ENCODE measurements at regions of chr13 and their contacts with region 1.

Region 1: DNA sequence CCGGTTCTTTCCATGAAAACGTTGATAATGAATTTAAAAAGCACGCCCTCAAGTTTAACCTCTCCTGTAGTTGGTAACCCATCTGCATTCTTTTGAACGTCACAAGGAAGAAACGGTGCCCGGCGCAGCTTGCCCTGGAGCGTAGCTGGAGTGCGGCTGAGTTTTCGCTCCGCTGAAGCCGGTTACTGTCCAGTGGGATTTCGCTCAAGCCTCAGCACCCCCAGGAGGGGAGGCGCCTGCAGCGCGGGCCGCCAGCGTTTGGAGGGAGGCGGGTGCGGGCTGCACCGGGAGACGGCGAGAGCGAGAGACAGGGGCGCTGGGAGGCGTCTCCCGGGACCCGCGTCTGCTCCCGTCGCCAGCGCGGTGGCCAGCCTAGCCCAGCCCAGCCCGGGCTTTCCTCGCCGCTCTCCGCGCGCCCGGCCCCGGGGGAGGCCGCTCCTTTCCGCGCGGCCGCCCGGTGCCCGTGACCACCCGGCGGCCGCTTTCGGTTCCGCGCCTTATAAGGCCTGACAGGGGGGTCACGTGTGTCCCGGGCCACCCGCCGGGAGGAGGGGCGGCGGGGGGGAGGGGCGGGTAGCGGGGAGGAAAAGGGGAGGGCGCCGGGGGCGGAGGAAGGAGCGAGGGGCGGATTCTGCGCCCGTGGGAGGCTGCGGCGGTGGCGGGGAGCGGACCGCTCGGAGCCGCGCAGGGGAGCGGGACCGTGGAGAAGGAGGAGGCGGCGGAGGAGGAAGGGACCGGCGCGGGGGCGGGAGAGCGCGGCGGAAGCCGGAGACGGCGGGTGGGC is 8.3 kb upstream of the DGKH start:
- DNase-seq: peak; percentile 80
- H3K4me3 Mint-ChIP-seq: peak overlapping the region; percentile 87
- H3K27ac Mint-ChIP-seq: peak overlapping the region; percentile 56
- H3K4me1 Mint-ChIP-seq: peaks cover 17% of the 10 kb centered on the region
- H3K27me3 Mint-ChIP-seq: peaks cover 44% of the 10 kb centered on the region

Region 2: GRCh38 chr13:41004875-41005693 is 1035.1 kb before region 1 on chr13:
- intact Hi-C with region 1: loop called (anchors 10 kb)
- DNase-seq: no peak
- H3K4me3 Mint-ChIP-seq: peak overlapping the region; percentile 59
- H3K27ac Mint-ChIP-seq: peak overlapping the region; percentile 88
- H3K4me1 Mint-ChIP-seq: peaks cover 66% of the 10 kb centered on the region
- H3K27me3 Mint-ChIP-seq: no peaks in the 10 kb centered on the region

Region 3: GRCh38 chr13:41263261-41264027 is 776.7 kb before region 1 on chr13 and contains the start of gene MTRF1:
- intact Hi-C with region 1: loop called (anchors 2 kb)
- DNase-seq: peak; percentile 72
- H3K4me3 Mint-ChIP-seq: peak within 1 kb of the TSS; percentile 95
- H3K27ac Mint-ChIP-seq: peak within 1 kb of the TSS; percentile 100
- H3K4me1 Mint-ChIP-seq: peaks cover 12% of the 10 kb centered on the region
- H3K27me3 Mint-ChIP-seq: no peaks in the 10 kb centered on the region
- total RNA-seq, gene MTRF1: 17.5 and 20.2 TPM in 2 replicates

Region 4: DNA sequence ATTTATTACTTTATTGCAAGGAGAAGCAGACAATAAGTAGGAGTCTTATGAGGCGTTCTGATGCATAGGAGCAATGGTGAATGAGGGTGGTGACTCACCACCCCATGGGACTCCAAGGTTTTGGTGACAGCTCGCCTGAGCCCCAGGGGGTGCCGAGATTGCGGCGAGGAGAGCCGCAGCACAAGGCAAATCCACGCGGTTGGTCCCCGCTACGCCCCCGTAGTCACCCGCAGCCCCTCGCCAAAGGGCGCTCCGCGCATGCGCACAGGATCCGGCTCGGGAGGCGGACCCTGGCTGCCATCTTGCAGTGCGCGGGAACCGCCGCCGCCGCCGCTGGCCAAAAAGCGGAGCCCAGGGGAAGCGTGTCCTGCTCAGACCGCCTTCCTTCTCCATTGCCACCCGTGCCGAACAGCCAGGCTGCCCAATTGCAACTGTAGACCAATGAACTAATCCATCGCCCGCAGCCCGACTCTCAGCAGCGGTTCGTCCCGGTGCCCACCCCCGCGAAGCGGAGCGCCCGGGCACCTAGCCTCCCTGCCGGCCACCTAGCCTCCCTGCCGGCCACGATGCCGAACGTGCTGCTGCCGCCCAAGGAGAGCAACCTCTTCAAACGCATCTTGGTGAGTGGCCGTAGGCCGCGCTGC is 729.1 kb before region 1 on chr13 and contains the start of gene NAA16:
- intact Hi-C with region 1: loop called (anchors 10 kb)
- DNase-seq: peak; percentile 92
- H3K4me3 Mint-ChIP-seq: peak within 1 kb of the TSS; percentile 94
- H3K27ac Mint-ChIP-seq: peak within 1 kb of the TSS; percentile 83
- H3K4me1 Mint-ChIP-seq: peaks cover 38% of the 10 kb centered on the region
- H3K27me3 Mint-ChIP-seq: peaks cover 2% of the 10 kb centered on the region
- total RNA-seq, gene NAA16: 31.9 and 33.4 TPM in 2 replicates

Region 5: DNA sequence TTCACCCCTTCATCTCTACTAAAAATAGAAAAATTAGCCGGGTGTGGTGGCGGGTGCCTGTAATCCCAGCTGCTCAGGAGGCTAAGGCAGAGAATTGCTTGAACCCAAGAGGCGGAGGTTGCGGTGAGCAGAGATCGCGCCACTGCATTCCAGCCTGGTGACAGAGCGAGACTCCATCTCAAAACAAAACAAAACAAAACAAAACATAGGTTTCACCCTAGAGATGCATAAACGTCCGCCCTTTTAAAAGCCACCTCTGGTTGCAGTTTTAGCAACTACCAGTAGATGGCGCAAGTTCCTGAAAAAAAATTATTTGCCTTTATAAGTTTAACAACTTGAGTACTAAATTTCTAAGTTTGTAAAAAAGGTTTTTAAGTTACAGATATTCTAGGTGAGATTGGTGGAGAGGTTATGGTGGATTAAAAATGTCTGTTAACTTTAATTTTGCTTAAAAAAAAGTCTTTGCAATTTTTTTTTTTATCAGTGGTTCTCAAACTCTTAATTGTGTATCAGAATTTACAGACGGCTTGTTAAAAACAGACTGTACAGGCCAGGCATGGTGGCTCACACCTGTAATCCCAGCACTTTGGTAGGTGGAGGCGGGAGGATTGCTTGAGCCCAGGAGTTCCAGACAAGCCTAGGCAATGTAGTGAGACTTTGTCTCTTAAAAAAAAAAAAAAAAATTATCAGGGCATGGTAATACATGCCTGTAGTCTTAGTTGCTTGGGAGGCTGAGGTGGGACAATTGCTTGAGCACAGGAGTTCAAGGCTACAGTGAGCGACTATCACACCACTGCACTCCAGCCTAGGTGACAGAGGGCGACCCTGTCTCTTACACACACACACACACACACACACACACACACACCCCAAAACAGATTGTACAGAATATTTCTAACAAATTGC is 687.0 kb before region 1 on chr13:
- intact Hi-C with region 1: loop called (anchors 10 kb)
- DNase-seq: peak; percentile 47
- H3K4me3 Mint-ChIP-seq: no peak overlapping the region
- H3K27ac Mint-ChIP-seq: peak overlapping the region; percentile 24
- H3K4me1 Mint-ChIP-seq: peaks cover 38% of the 10 kb centered on the region
- H3K27me3 Mint-ChIP-seq: no peaks in the 10 kb centered on the region

Region 6: GRCh38 chr13:41613984-41614661 is 426.0 kb before region 1 on chr13:
- intact Hi-C with region 1: no loop called
- DNase-seq: no peak
- H3K4me3 Mint-ChIP-seq: no peak overlapping the region
- H3K27ac Mint-ChIP-seq: no peak overlapping the region
- H3K4me1 Mint-ChIP-seq: no peaks in the 10 kb centered on the region
- H3K27me3 Mint-ChIP-seq: no peaks in the 10 kb centered on the region

Region 7: DNA sequence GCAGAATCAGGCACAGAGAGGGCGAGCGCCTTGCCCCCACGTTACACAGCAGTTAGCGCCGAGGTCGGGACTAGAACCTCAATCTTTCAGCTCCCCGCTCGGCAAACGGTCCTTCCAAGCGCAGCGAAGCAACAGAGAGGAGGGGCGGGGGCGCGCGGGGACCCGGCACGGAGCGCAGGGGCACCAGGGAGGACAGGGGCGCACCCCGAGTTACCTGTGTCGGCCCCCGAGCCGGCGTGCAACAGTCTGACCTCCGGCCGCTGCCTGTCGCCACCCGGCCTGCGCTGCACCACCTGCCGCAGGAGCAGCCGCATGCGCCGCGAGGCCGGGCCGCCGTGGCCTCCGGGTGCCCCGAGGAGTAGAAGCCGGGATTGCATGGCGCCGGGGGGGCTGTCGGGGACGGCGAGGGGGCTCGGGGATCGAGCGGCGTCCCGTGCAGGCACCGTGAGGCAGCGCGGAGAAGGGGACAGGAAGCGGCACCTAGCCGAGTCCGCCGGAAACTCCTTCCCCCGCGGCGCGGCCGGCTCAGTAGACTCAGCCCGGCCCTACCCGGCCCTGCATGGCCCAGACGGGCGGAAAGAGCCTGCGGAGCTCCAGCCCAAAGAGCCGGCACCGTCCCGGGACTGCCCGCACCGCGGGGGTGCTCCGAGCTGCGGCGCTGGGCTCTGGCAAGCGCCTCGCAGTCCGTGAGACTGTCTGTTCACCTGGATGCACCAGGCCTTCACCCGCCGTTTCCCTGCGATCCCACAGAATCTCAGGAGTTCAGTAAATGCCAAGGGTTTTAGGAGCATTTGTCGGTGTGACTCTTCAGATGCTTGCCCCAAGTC is 79.3 kb before region 1 on chr13 and contains the start of gene VWA8:
- intact Hi-C with region 1: loop called (anchors 1 kb)
- DNase-seq: peak; percentile 81
- H3K4me3 Mint-ChIP-seq: peak within 1 kb of the TSS; percentile 95
- H3K27ac Mint-ChIP-seq: peak within 1 kb of the TSS; percentile 91
- H3K4me1 Mint-ChIP-seq: peaks cover 45% of the 10 kb centered on the region
- H3K27me3 Mint-ChIP-seq: peaks cover 3% of the 10 kb centered on the region
- total RNA-seq, gene VWA8: 26.4 and 26.6 TPM in 2 replicates

Region 8: GRCh38 chr13:41973247-41973741 is 66.8 kb before region 1 on chr13:
- intact Hi-C with region 1: no loop called
- DNase-seq: no peak
- H3K4me3 Mint-ChIP-seq: no peak overlapping the region
- H3K27ac Mint-ChIP-seq: no peak overlapping the region
- H3K4me1 Mint-ChIP-seq: peaks cover 16% of the 10 kb centered on the region
- H3K27me3 Mint-ChIP-seq: peaks cover 4% of the 10 kb centered on the region